Activated CD8-positive, alpha-beta T cell treated with anti-CD3 and anti-CD28 coated beads for 36 hours (primary cell): ENCODE measurements at regions of chrX and their contacts with region 1.

Region 1: DNA sequence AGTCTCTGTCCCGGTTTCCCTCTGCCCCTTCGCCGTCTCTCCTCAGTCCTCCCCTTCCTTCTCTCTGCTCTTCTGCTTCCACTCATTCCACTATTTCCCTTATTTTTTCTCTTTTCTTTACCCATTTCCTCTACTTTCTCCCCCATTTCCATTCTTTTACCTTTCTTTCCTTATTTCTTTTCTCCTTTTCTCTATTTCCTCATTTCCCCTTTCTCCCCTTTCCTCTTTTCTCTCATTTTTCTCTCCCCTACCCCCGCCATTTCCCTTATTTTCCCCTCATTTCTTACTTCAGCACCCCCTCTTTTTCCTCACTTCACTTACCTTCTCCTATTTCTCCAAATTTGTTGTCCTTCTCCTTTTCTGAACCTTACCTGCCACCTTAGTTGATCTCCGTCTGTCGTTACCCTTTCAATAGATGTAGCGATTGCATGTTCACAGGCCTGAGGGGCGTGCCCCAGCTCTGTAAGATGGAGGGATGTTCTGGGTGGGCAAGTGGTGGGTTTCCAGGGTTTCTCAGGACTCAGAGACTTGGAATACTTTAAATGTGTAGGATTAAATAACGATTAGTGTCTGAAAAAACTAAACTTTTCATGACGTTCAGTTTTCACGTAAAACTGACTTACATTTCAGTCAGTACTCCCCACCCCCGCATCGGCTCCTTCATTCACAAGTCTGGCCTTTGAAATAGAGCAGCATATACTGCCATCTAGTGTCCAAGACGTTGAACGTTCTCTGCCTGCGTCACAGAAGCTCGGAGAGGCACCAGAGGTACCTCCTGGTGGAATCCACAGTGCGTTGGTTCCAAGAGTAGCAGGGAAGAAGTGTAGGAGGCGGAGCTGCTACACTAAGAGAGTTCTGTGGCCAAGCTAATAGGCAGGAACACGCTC is 641 bp upstream of the NCBP2L start:
- DNase-seq: peak; percentile 92
- ATAC-seq: peak; percentile 77
- H3K4me3 Mint-ChIP-seq: peak overlapping the region; percentile 82
- H3K27ac Mint-ChIP-seq: peak overlapping the region; percentile 85
- H3K4me1 Mint-ChIP-seq: peaks cover 10% of the 10 kb centered on the region
- H3K27me3 Mint-ChIP-seq: no peaks in the 10 kb centered on the region
- CTCF ChIP-seq: peak; percentile 62

Region 2: GRCh38 chrX:107537815-107538214 is 239.1 kb before region 1 on chrX:
- CTCF ChIA-PET with region 1: interaction called, 4 read pairs
- POLR2A ChIA-PET with region 1: no interaction called
- intact Hi-C with region 1: loop called (anchors 10 kb)
- DNase-seq: peak; percentile 62
- ATAC-seq: peak; percentile 76
- H3K4me3 Mint-ChIP-seq: no peak overlapping the region
- H3K27ac Mint-ChIP-seq: no peak overlapping the region
- H3K4me1 Mint-ChIP-seq: no peaks in the 10 kb centered on the region
- H3K27me3 Mint-ChIP-seq: peaks cover 4% of the 10 kb centered on the region
- CTCF ChIP-seq: peak; percentile 31

Region 3: DNA sequence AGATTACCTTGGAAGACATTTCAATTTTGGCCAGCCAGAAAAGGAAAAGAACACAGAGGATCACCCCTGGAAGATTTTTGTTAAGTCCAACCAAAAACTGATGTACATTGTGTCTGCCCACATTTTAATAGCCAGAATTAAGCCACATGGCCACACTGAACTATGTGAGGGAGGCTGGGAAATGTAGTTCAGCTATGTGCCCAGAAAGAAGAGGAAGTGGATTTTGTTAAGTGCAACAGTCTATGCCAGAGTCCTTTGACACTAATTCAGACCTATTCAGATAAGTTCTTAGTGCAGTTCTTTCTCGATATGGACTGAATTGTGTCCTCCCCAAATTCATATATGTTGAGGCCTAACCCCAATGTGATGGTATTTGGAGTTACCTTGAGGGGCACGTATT is 130.2 kb before region 1 on chrX:
- CTCF ChIA-PET with region 1: interaction called, 181 read pairs
- POLR2A ChIA-PET with region 1: no interaction called
- intact Hi-C with region 1: no loop called
- DNase-seq: no peak
- ATAC-seq: no peak
- H3K4me3 Mint-ChIP-seq: no peak overlapping the region
- H3K27ac Mint-ChIP-seq: no peak overlapping the region
- H3K4me1 Mint-ChIP-seq: no peaks in the 10 kb centered on the region
- H3K27me3 Mint-ChIP-seq: no peaks in the 10 kb centered on the region
- CTCF ChIP-seq: no peak

Region 4: GRCh38 chrX:107672955-107673378 is 103.9 kb before region 1 on chrX:
- CTCF ChIA-PET with region 1: interaction called, 49 read pairs
- POLR2A ChIA-PET with region 1: interaction called, 5 read pairs
- intact Hi-C with region 1: loop called (anchors 5 kb)
- DNase-seq: peak; percentile 80
- ATAC-seq: peak; percentile 64
- H3K4me3 Mint-ChIP-seq: peak overlapping the region; percentile 55
- H3K27ac Mint-ChIP-seq: peak overlapping the region; percentile 95
- H3K4me1 Mint-ChIP-seq: peaks cover 34% of the 10 kb centered on the region
- H3K27me3 Mint-ChIP-seq: no peaks in the 10 kb centered on the region
- CTCF ChIP-seq: peak; percentile 58

Region 5: DNA sequence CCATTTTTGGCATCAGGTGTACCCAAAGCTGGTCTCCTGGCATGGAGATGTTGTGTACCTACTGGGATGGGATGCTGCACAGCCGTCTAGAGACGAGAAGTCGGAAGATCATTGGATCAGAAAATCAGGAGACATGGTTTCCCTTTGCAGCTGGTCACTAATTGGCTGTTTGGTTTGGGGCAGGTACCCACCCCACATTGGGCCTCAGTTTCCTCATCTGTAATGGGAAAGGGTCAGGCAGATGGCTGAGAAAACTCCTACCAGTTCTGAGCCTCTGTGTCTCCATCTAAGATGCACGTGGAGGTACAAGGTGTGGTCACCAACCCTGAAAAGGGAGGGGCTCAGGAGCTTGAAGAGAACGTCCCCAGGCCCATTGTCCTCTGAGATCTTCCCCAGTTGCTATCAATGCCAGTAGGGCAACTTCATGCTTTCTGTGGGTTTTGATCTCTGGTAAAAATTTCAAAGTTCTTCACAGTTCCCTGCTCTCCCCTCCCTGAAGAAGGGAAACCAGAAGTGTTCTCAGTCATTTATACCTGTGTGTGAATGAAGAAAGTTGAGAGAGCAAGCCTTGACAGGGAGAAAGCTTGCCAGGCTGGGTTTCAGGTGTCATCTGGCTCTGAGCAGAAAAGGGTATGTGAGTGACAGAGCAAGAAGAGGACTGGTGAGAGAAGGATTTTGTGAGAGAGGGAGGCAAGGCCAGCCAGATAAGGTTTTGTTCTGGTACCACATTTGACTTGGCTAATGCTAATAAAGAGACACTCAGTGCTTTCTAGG is 16.4 kb before region 1 on chrX:
- CTCF ChIA-PET with region 1: interaction called, 11 read pairs
- POLR2A ChIA-PET with region 1: no interaction called
- intact Hi-C with region 1: no loop called
- DNase-seq: no peak
- ATAC-seq: no peak
- H3K4me3 Mint-ChIP-seq: no peak overlapping the region
- H3K27ac Mint-ChIP-seq: no peak overlapping the region
- H3K4me1 Mint-ChIP-seq: peaks cover 11% of the 10 kb centered on the region
- H3K27me3 Mint-ChIP-seq: no peaks in the 10 kb centered on the region
- CTCF ChIP-seq: no peak

Region 6: GRCh38 chrX:107787827-107788226 is 10.9 kb after region 1 on chrX:
- CTCF ChIA-PET with region 1: interaction called, 12 read pairs
- POLR2A ChIA-PET with region 1: no interaction called
- intact Hi-C with region 1: no loop called
- DNase-seq: no peak
- ATAC-seq: no peak
- H3K4me3 Mint-ChIP-seq: no peak overlapping the region
- H3K27ac Mint-ChIP-seq: no peak overlapping the region
- H3K4me1 Mint-ChIP-seq: no peaks in the 10 kb centered on the region
- H3K27me3 Mint-ChIP-seq: peaks cover 3% of the 10 kb centered on the region
- CTCF ChIP-seq: no peak